ENCODE measurements at regions of chr4 and their contacts with region 1.

Region 1: DNA sequence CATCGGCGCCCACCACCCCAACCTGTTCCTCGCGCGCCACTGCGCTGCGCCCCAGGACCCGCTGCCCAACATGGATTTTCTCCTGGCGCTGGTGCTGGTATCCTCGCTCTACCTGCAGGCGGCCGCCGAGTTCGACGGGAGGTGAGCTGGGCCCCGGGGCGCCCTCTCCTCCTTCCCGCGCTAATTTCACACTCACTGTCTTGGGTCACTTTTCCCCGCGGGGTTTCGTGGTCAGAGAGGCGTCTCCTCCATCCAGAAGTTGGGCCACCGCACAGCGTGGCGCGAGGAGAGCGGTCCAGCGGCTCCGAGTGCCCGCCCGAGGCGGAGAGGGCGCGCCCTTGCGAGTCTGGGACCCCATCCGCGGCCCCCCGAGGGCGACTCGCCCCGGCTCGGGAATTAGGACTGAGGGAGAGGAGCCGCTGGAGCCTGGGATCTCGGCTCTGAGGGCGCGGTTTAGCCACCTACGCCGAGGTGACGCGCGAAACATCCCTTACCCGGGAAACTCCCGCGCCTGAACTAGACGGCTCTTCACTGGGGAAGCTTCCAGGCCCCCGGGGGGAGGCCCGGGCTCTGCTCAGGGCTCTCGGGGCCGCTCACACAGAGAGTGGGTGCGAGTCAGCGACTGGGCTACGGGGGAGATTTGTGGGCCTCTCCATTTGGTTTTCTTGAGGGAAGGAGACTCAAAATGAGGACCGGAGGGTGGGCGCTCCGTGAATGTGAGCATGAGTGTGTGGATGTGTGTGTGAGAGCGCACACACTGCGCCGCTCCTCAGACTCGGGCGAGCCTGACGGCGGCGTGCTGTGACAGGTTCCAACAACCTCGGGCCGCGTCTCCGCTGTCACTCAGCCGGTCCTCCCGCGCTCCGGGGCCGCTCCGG is 551 bp downstream of the NPNT start:
- DNase-seq: no peak
- ATAC-seq: peak; percentile 36 to 55
- H3K4me3 ChIP-seq: peak overlapping the region; percentile 60 to 75 (median 64)
- H3K27ac ChIP-seq: peak overlapping the region in 1 of 4 donors; percentile 67
- H3K4me1 ChIP-seq: peaks cover 0 to 13% of the 10 kb centered on the region in 2 donors
- H3K27me3 ChIP-seq: peaks cover 0 to 4% (median 0%) of the 10 kb centered on the region in 3 donors
- CTCF ChIP-seq: peak in 3 of 5 experiments; percentile 10 to 23 (median 16)
- POLR2A ChIP-seq: no peak

Region 2: DNA sequence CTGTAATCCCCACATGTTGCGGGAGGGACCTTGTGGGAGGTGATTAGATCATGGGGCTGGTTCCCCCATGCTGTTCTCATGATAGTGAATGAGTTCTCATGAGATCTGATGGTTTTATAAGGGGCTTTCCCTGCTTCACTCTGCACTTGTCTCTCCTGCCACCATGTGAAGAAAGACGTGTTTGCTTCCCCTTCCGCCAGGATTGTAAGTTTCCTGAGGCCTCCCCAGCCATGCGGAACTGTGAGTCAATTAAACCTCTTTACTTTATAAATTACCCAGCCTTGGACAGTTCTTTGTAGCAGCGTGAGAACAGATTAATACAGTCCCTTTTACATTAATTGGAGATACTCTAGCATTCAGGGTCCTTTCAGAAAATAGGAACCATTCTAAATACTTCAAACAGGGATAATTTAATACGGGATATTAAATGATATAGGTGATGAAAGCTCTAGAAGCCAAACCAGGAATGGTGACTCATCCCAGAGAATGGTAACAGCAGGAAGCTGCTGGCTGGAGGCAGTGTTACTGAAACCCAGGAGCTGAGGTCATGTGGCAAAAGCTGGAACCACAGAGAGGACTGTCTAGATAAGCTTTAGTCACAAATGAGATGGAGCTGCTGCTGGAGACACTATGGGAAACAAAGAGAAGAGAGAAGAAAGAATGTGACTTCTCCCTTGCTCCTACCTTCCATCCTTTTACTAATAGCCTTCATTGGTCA is 130.0 kb before region 1 on chr4:
- in situ Hi-C with region 1: no loop called
- intact Hi-C with region 1: loop called (anchors 10 kb)
- DNase-seq: peak; percentile 55 to 71
- ATAC-seq: peak; percentile 100
- H3K4me3 ChIP-seq: peak overlapping the region in 1 of 4 donors; percentile 18
- H3K27ac ChIP-seq: peak overlapping the region; percentile 53 to 64 (median 58)
- H3K4me1 ChIP-seq: peaks cover 0 to 5% of the 10 kb centered on the region in 2 donors
- H3K27me3 ChIP-seq: no peaks in the 10 kb centered on the region
- CTCF ChIP-seq: no peak
- POLR2A ChIP-seq: no peak

Region 3: DNA sequence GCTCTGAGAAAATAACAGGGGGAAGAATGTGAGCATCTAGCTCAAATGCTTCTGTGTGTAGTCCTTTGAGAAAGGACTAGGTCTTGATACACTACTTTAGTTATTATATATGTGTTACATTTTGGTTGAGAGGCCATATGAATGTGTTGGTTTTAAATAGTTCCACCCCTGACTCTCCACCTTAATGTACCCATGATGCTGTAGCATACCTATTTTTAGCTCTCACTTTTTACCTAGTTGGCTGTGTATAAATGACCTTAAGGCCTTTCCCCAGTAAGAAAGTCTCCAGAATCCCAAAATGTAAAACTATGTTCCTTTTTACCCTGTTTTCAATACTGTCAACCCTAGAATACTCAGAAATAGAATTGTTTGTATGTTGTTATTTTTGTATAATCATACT is 20.6 kb before region 1 on chr4:
- in situ Hi-C with region 1: no loop called
- intact Hi-C with region 1: loop called (anchors 1 kb)
- DNase-seq: no peak
- ATAC-seq: peak; percentile 47 to 71
- H3K4me3 ChIP-seq: no peak overlapping the region
- H3K27ac ChIP-seq: peak overlapping the region in 1 of 4 donors; percentile 61
- H3K4me1 ChIP-seq: peaks cover 20 to 32% of the 10 kb centered on the region in 2 donors
- H3K27me3 ChIP-seq: no peaks in the 10 kb centered on the region
- CTCF ChIP-seq: no peak
- POLR2A ChIP-seq: no peak

Region 4: DNA sequence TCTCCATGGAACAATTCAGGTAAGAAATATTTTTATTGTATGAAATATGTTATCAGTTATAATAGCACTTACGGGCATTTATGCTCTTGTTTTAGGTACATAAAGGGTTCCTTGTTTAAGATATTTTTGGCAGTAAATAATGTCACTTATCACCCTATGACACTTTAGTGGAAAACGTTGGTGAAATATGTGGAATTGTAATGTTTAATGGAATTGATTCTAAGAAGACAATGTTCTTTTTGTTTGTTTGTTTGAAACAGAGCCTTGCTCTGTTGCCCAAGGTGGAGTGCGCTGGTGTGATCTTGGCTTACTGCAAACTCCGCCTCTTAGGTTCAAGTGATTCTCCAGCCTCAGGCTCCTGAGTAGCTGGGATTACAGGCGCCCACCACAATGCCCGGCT is 16.8 kb after region 1 on chr4:
- in situ Hi-C with region 1: no loop called
- intact Hi-C with region 1: loop called (anchors 1 kb)
- DNase-seq: no peak
- ATAC-seq: no peak
- H3K4me3 ChIP-seq: no peak overlapping the region
- H3K27ac ChIP-seq: no peak overlapping the region
- H3K4me1 ChIP-seq: no peaks in the 10 kb centered on the region
- H3K27me3 ChIP-seq: no peaks in the 10 kb centered on the region
- CTCF ChIP-seq: no peak
- POLR2A ChIP-seq: no peak

Region 5: GRCh38 chr4:105990939-105991338 is 95.1 kb after region 1 on chr4:
- in situ Hi-C with region 1: no loop called
- intact Hi-C with region 1: loop called (anchors 5 kb)
- DNase-seq: peak; percentile 92 to 97
- ATAC-seq: peak; percentile 97 to 98
- H3K4me3 ChIP-seq: no peak overlapping the region
- H3K27ac ChIP-seq: peak overlapping the region; percentile 79 to 91 (median 82)
- H3K4me1 ChIP-seq: peaks cover 24 to 34% of the 10 kb centered on the region in 2 donors
- H3K27me3 ChIP-seq: no peaks in the 10 kb centered on the region
- CTCF ChIP-seq: no peak
- POLR2A ChIP-seq: no peak

Region 6: GRCh38 chr4:106048250-106048971 is 152.6 kb after region 1 on chr4:
- in situ Hi-C with region 1: no loop called
- intact Hi-C with region 1: loop called (anchors 10 kb)
- DNase-seq: no peak
- ATAC-seq: no peak
- H3K4me3 ChIP-seq: no peak overlapping the region
- H3K27ac ChIP-seq: no peak overlapping the region
- H3K4me1 ChIP-seq: no peaks in the 10 kb centered on the region
- H3K27me3 ChIP-seq: no peaks in the 10 kb centered on the region
- CTCF ChIP-seq: no peak
- POLR2A ChIP-seq: no peak